Activated CD8-positive, alpha-beta memory T cell treated with anti-CD3 and anti-CD28 coated beads, Interleukin-2, amount 10 ng/mL, durations not matched to agents 7 days and 5 days (primary cell): ENCODE measurements at regions of chr6 and their contacts with region 1.

Region 1: GRCh38 chr6:159110013-159110412 is 59.2 kb upstream of the FNDC1 start:
- DNase-seq: peak; percentile 58
- ATAC-seq: no peak
- H3K4me3 Mint-ChIP-seq: no peak overlapping the region
- H3K27ac Mint-ChIP-seq: no peak overlapping the region
- H3K4me1 Mint-ChIP-seq: peaks cover 57% of the 10 kb centered on the region
- H3K27me3 Mint-ChIP-seq: no peaks in the 10 kb centered on the region

Region 2: GRCh38 chr6:159017757-159018559 is 92.1 kb before region 1 on chr6:
- CTCF ChIA-PET with region 1: interaction called, 49 read pairs
- DNase-seq: no peak
- ATAC-seq: peak; percentile 87
- H3K4me3 Mint-ChIP-seq: no peak overlapping the region
- H3K27ac Mint-ChIP-seq: peak overlapping the region; percentile 69
- H3K4me1 Mint-ChIP-seq: peaks cover 32% of the 10 kb centered on the region
- H3K27me3 Mint-ChIP-seq: no peaks in the 10 kb centered on the region

Region 3: DNA sequence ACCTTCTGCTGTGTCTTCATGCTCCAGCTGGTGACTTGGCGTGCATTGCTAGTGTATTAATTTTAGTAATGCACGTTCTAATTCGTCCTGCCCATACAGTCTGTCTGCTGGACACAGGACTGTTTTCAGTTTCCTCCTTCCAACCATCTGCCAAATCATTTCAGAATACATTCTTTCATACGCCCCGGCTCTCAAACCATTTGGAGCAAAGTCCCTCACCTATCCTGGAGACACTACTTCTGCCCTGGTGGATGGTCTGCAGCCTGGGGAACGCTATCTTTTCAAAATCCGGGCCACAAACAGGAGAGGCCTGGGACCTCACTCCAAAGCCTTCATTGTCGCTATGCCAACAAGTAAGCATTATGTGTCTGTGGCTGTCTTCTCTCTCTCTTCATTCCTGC is 119.6 kb after region 1 on chr6:
- CTCF ChIA-PET with region 1: no interaction called
- DNase-seq: no peak
- ATAC-seq: no peak
- H3K4me3 Mint-ChIP-seq: no peak overlapping the region
- H3K27ac Mint-ChIP-seq: no peak overlapping the region
- H3K4me1 Mint-ChIP-seq: no peaks in the 10 kb centered on the region
- H3K27me3 Mint-ChIP-seq: peaks cover 51% of the 10 kb centered on the region